Activated CD4-positive, alpha-beta memory T cell treated with anti-CD3 and anti-CD28 coated beads, Interleukin-2, amount 10 ng/mL, durations not matched to agents 7 days and 5 days (primary cell): ENCODE measurements at regions of chr1 and their contacts with region 1.

Region 1: GRCh38 chr1:27357281-27358037 is 9.3 kb downstream of the MAP3K6 start:
- DNase-seq: peak; percentile 87
- H3K4me3 Mint-ChIP-seq: peak overlapping the region; percentile 66
- H3K27ac Mint-ChIP-seq: peak overlapping the region; percentile 92
- H3K4me1 Mint-ChIP-seq: peaks cover 50% of the 10 kb centered on the region
- H3K27me3 Mint-ChIP-seq: peaks cover 8% of the 10 kb centered on the region

Region 2: GRCh38 chr1:27097484-27097917 is 260.0 kb before region 1 on chr1:
- CTCF ChIA-PET with region 1: no interaction called
- POLR2A ChIA-PET with region 1: no interaction called
- DNase-seq: peak; percentile 80
- H3K4me3 Mint-ChIP-seq: no peak overlapping the region
- H3K27ac Mint-ChIP-seq: no peak overlapping the region
- H3K4me1 Mint-ChIP-seq: peaks cover 12% of the 10 kb centered on the region
- H3K27me3 Mint-ChIP-seq: no peaks in the 10 kb centered on the region

Region 3: GRCh38 chr1:27218736-27219135 is 138.7 kb before region 1 on chr1:
- CTCF ChIA-PET with region 1: no interaction called
- POLR2A ChIA-PET with region 1: no interaction called
- DNase-seq: no peak
- H3K4me3 Mint-ChIP-seq: no peak overlapping the region
- H3K27ac Mint-ChIP-seq: no peak overlapping the region
- H3K4me1 Mint-ChIP-seq: no peaks in the 10 kb centered on the region
- H3K27me3 Mint-ChIP-seq: peaks cover 5% of the 10 kb centered on the region

Region 4: DNA sequence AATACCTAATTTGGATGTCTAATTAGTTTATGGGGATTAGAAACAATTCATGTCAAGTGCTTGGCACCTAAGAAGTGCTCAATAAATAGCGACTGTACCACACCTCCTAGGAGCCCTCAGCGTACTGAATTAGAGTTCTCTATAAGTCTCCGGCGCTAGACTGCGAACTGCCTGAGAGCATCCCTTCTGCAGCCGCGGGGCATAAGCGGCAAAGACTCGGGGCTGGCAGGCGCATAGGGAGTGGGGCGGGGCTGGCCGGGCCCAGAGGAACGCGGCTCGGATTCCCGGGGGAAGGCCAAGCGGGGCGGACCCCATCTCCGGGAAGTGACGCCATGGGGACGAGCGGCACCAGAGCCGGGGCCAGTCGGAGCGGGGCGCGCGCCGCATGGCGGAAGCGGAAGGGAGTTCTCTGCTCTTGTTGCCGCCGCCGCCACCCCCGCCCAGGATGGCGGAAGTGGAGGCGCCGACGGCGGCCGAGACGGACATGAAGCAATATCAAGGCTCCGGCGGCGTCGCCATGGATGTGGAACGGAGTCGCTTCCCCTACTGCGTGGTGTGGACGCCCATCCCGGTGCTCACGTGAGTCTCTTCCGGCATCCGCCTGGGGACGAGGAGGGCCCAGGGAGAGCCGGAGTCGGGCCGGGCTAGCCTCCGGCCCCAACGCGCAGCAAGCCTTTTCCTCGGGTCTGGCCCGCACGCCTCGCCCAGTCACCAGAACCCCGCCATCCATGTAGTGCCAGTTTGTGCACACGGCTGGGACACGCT is 35.5 kb before region 1 on chr1 and contains the start of gene TMEM222:
- CTCF ChIA-PET with region 1: interaction called, 12 read pairs
- POLR2A ChIA-PET with region 1: interaction called, 11 read pairs
- DNase-seq: peak; percentile 98
- H3K4me3 Mint-ChIP-seq: peak within 1 kb of the TSS; percentile 96
- H3K27ac Mint-ChIP-seq: peak within 1 kb of the TSS; percentile 89
- H3K4me1 Mint-ChIP-seq: peaks cover 46% of the 10 kb centered on the region
- H3K27me3 Mint-ChIP-seq: peaks cover 4% of the 10 kb centered on the region
- total RNA-seq, gene TMEM222: 33.7 to 35.7 TPM

Region 5: GRCh38 chr1:27332536-27333281 is 24.8 kb before region 1 on chr1:
- CTCF ChIA-PET with region 1: interaction called, 21 read pairs
- POLR2A ChIA-PET with region 1: interaction called, 4 read pairs
- DNase-seq: peak; percentile 66
- H3K4me3 Mint-ChIP-seq: no peak overlapping the region
- H3K27ac Mint-ChIP-seq: peak overlapping the region; percentile 68
- H3K4me1 Mint-ChIP-seq: peaks cover 34% of the 10 kb centered on the region
- H3K27me3 Mint-ChIP-seq: no peaks in the 10 kb centered on the region

Region 6: DNA sequence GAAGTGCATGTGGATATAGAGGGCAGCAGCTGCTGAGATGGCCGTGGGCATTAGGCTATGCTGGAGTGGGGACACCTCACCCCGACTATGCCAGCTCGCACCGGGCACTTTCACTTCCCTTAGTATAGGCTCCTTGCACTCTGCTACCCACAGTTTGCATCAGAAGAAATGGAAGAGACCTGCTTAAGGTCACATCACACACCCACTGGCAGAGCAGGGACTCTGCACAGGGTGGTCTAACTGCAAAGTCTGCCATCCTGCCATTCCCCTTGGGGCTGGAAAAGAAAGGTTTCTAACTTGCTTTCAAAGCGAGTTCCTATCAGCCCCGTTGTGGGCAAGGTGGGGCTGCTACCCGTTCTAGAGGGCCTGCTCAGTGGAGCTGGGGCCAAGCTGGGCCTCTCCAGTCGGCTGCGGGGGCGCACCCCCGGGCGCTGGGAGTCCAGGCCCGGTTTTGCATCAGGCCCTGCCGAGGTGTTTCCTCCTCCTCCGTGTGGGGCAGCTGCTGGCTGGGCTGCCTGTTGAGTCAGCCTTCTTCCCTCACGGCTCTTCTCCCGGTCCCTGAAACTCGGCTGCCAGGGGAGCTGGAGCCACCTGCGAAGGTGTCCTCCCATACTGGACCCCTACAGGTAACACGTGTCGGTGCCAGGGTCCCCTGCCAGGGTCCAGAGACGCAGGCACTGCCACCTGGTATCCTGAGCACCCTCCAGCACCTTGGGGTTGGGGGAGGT is 15.8 kb before region 1 on chr1 and contains the start of gene SYTL1:
- CTCF ChIA-PET with region 1: interaction called, 36 read pairs
- POLR2A ChIA-PET with region 1: interaction called, 93 read pairs
- DNase-seq: peak; percentile 79
- H3K4me3 Mint-ChIP-seq: peak within 1 kb of the TSS; percentile 93
- H3K27ac Mint-ChIP-seq: peak within 1 kb of the TSS; percentile 95
- H3K4me1 Mint-ChIP-seq: peaks cover 46% of the 10 kb centered on the region
- H3K27me3 Mint-ChIP-seq: no peaks in the 10 kb centered on the region
- total RNA-seq, gene SYTL1: 124 to 136 TPM

Region 7: DNA sequence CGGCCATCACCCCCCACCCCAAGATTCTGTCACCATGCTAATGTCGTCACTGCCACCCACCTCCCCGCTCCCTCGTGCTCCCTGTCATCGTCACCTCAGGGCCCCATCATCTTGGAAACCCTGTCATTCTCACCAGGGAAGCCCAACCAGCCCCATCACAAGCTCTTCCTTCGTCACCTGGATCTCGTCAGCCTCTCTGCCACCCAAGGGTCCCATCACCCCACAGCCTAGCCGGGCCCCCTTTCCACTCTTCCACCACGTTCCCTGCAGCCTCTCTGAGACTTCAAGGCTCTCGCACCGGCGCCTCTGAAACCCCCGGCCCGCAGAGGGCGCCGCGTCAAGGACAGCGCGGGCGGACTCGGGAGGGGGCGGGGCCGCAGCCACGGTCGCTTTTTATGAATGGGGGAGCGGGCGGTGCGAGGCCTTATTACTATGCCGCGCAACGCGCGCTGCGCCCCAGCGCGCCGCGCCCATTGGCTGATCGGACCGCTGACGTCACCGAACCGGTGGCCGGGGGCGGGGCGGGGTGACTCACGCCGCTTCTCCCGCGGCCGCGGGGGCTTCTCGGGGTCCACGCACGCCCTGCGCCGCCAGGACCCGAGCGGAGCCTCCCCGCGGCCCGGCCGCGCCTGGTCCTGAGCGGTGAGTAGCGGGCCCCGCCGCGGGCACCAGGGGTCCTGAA is 34.8 kb after region 1 on chr1 and contains the start of gene GPR3:
- CTCF ChIA-PET with region 1: interaction called, 13 read pairs
- POLR2A ChIA-PET with region 1: interaction called, 8 read pairs
- DNase-seq: peak; percentile 95
- H3K4me3 Mint-ChIP-seq: peak within 1 kb of the TSS; percentile 74
- H3K27ac Mint-ChIP-seq: peak within 1 kb of the TSS; percentile 54
- H3K4me1 Mint-ChIP-seq: peaks cover 25% of the 10 kb centered on the region
- H3K27me3 Mint-ChIP-seq: peaks cover 3% of the 10 kb centered on the region
- total RNA-seq, gene GPR3: 0.58 to 0.65 TPM

Region 8: GRCh38 chr1:27427329-27427728 is 69.9 kb after region 1 on chr1:
- CTCF ChIA-PET with region 1: no interaction called
- POLR2A ChIA-PET with region 1: no interaction called
- DNase-seq: no peak
- H3K4me3 Mint-ChIP-seq: no peak overlapping the region
- H3K27ac Mint-ChIP-seq: peak overlapping the region; percentile 18
- H3K4me1 Mint-ChIP-seq: peaks cover 67% of the 10 kb centered on the region
- H3K27me3 Mint-ChIP-seq: no peaks in the 10 kb centered on the region